Right cardiac atrium (tissue), 5 donors: ENCODE measurements at regions of chr1 and their contacts with region 1.

Region 1: GRCh38 chr1:62407405-62408009 is 29.3 kb upstream of the USP1 start:
- DNase-seq: no peak
- ATAC-seq: peak; percentile 41 to 45
- H3K4me3 ChIP-seq: no peak overlapping the region
- H3K27ac ChIP-seq: no peak overlapping the region
- H3K4me1 ChIP-seq: no peaks in the 10 kb centered on the region
- H3K27me3 ChIP-seq: no peaks in the 10 kb centered on the region

Region 2: GRCh38 chr1:62175568-62176179 is 231.8 kb before region 1 on chr1:
- intact Hi-C with region 1: loop called (anchors 2 to 5 kb)
- DNase-seq: no peak
- ATAC-seq: no peak
- H3K4me3 ChIP-seq: no peak overlapping the region
- H3K27ac ChIP-seq: no peak overlapping the region
- H3K4me1 ChIP-seq: peaks cover 1% of the 10 kb centered on the region
- H3K27me3 ChIP-seq: no peaks in the 10 kb centered on the region

Region 3: GRCh38 chr1:62346886-62347285 is 60.6 kb before region 1 on chr1:
- intact Hi-C with region 1: no loop called
- DNase-seq: no peak
- ATAC-seq: no peak
- H3K4me3 ChIP-seq: no peak overlapping the region
- H3K27ac ChIP-seq: no peak overlapping the region
- H3K4me1 ChIP-seq: no peaks in the 10 kb centered on the region
- H3K27me3 ChIP-seq: no peaks in the 10 kb centered on the region